PC-9 (cell line): ENCODE measurements at regions of chr2 and their contacts with region 1.

Region 1: GRCh38 chr2:42095923-42096408 is 48.1 kb downstream of the PKDCC start:
- DNase-seq: peak; percentile 60 to 68
- H3K4me3 ChIP-seq: no peak overlapping the region
- H3K27ac ChIP-seq: no peak overlapping the region
- H3K4me1 ChIP-seq: no peaks in the 10 kb centered on the region
- H3K27me3 ChIP-seq: no peaks in the 10 kb centered on the region
- CTCF ChIP-seq: peak; percentile 98

Region 2: GRCh38 chr2:42238644-42239288 is 142.8 kb after region 1 on chr2:
- CTCF ChIA-PET with region 1: interaction called, 8 read pairs
- POLR2A ChIA-PET with region 1: no interaction called
- intact Hi-C with region 1: loop called (anchors 1 kb)
- DNase-seq: peak; percentile 32 to 43
- H3K4me3 ChIP-seq: no peak overlapping the region
- H3K27ac ChIP-seq: peak overlapping the region; percentile 13; the same call in 1 of the 2 replicates
- H3K4me1 ChIP-seq: peaks cover 6% of the 10 kb centered on the region; the same call in 1 of the 2 replicates
- H3K27me3 ChIP-seq: no peaks in the 10 kb centered on the region
- CTCF ChIP-seq: peak; percentile 69

Region 3: GRCh38 chr2:42494355-42495233 is 398.6 kb after region 1 on chr2:
- CTCF ChIA-PET with region 1: interaction called, 3 read pairs
- POLR2A ChIA-PET with region 1: no interaction called
- intact Hi-C with region 1: loop called (anchors 5 kb)
- DNase-seq: peak; percentile 93 to 99
- H3K4me3 ChIP-seq: peak overlapping the region; percentile 89
- H3K27ac ChIP-seq: peak overlapping the region; percentile 68
- H3K4me1 ChIP-seq: peaks cover 25% of the 10 kb centered on the region
- H3K27me3 ChIP-seq: no peaks in the 10 kb centered on the region
- CTCF ChIP-seq: peak; percentile 96

Region 4: GRCh38 chr2:43611987-43612894 is 1516.3 kb after region 1 on chr2:
- CTCF ChIA-PET with region 1: no interaction called
- POLR2A ChIA-PET with region 1: no interaction called
- intact Hi-C with region 1: loop called (anchors 5 kb)
- DNase-seq: peak; percentile 77 to 79
- H3K4me3 ChIP-seq: no peak overlapping the region
- H3K27ac ChIP-seq: no peak overlapping the region
- H3K4me1 ChIP-seq: 0 out of 2 replicates have a peak, but pooled peaks cover 3% of the 10 kb centered on the region
- H3K27me3 ChIP-seq: no peaks in the 10 kb centered on the region
- CTCF ChIP-seq: peak; percentile 96